CD14-positive monocyte (primary cell): ENCODE measurements at regions of chr6 and their contacts with region 1.

Region 1: DNA sequence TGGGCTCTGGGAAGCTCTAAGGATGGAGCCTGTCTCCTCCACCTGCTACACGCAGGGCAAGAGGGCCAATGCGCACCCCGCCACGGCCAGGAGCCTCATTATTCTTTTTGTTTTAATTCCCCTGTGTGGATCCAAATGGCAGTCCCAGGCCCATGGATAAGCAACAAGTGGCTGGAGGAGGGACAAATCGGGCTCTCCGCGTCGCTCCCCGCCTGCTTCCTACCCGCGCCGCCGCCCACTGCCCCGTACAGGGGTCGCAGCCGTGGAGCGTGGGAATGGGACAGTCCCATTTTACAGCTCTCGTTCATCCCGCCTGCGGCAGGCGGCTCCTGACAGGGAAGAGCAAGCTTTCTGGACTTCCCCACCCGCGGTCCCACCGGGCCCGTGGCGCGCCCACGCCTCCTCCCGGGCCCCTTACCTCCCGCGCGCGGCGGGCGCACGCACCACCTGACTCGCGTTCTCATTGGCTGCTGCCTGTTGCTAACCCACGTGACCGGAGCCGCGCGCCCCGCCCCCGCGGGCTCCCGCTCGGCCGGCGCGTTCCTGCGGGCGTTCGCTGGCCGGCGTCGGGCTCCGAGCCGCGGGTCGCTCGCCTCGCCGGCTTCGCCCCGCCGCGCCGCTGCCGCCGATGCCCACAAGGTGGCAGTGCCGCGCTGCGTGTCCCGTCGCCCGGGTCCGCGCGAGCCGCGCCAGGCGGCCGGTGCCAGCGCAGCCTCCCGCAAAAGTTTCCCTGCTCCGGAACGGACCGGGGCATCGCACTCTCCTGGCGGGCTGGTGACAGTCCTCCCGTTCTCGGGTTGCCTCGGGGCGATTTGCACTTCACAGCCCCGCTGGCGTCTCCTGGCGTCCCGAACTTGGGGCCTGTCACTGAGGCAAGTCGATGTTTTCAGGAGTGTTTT is 93.3 kb downstream of the CD83 start:
- DNase-seq: peak; percentile 81 to 92 (median 92)
- H3K4me3 ChIP-seq: peak overlapping the region; percentile 65 to 80 (median 72)
- H3K4me3 Mint-ChIP-seq: peak overlapping the region; percentile 85 to 92
- H3K27ac ChIP-seq: peak overlapping the region; percentile 65 to 89
- H3K27ac Mint-ChIP-seq: peak overlapping the region; percentile 88 to 97 (median 92)
- H3K4me1 ChIP-seq: peaks cover 21 to 25% of the 10 kb centered on the region in 2 donors
- H3K4me1 Mint-ChIP-seq: peaks cover 21% of the 10 kb centered on the region
- H3K27me3 ChIP-seq: no peaks in the 10 kb centered on the region
- H3K27me3 Mint-ChIP-seq: peaks cover 2 to 5% (median 3%) of the 10 kb centered on the region in 3 donors
- CTCF ChIP-seq: peak; percentile 64

Region 2: GRCh38 chr6:14016935-14017625 is 193.8 kb before region 1 on chr6:
- intact Hi-C with region 1: no loop called
- DNase-seq: no peak
- H3K4me3 ChIP-seq: no peak overlapping the region
- H3K4me3 Mint-ChIP-seq: no peak overlapping the region
- H3K27ac ChIP-seq: no peak overlapping the region
- H3K27ac Mint-ChIP-seq: no peak overlapping the region
- H3K4me1 ChIP-seq: no peaks in the 10 kb centered on the region
- H3K4me1 Mint-ChIP-seq: peaks cover 8% of the 10 kb centered on the region
- H3K27me3 ChIP-seq: no peaks in the 10 kb centered on the region
- H3K27me3 Mint-ChIP-seq: peaks cover 5 to 9% (median 7%) of the 10 kb centered on the region in 3 donors
- CTCF ChIP-seq: no peak

Region 3: GRCh38 chr6:14381829-14382677 is 171.1 kb after region 1 on chr6:
- intact Hi-C with region 1: no loop called
- DNase-seq: no peak
- H3K4me3 ChIP-seq: no peak overlapping the region
- H3K4me3 Mint-ChIP-seq: no peak overlapping the region
- H3K27ac ChIP-seq: peak overlapping the region in 1 of 2 donors; percentile 83
- H3K27ac Mint-ChIP-seq: peak overlapping the region in 1 of 7 donors; percentile 92
- H3K4me1 ChIP-seq: peaks cover 31 to 36% of the 10 kb centered on the region in 2 donors
- H3K4me1 Mint-ChIP-seq: peaks cover 44% of the 10 kb centered on the region
- H3K27me3 ChIP-seq: no peaks in the 10 kb centered on the region
- H3K27me3 Mint-ChIP-seq: peaks cover 0 to 2% (median 0%) of the 10 kb centered on the region in 3 donors
- CTCF ChIP-seq: no peak

Region 4: DNA sequence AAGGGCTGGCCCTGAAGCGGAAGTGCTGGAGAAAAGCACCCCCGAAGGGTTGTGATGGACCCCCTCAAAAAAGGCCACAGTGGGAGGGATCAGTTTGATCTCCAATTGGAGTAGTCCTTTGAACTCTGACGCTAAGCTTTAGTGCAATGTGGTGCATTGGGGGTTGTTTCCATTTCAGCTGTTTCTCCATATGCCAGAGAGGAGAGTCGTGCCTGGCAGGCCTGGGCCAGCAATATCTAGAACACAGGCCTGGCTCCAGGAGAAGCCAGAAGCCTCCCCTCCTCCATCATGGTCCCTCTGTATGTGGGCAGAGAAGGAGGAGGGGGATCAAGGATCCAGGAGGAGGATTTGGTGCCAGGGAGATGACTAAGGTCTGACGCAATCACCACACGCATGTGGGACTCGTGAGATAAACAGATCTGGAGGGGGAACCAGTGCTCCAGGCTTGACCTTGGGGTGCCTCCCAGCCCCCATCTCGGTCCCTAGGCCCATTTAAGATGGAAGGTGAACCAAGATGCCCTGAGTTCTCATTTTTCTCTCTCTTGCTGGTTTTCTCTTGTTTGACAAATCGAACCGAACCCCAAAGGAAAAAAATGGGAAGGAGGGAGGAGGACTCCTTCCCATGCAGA is 517.6 kb after region 1 on chr6:
- intact Hi-C with region 1: loop called in 1 of 2 experiments (anchors 5 kb)
- DNase-seq: peak; percentile 96 to 97 (median 96)
- H3K4me3 ChIP-seq: no peak overlapping the region
- H3K4me3 Mint-ChIP-seq: peak overlapping the region; percentile 21 to 39
- H3K27ac ChIP-seq: peak overlapping the region; percentile 99 to 100
- H3K27ac Mint-ChIP-seq: peak overlapping the region; percentile 96 to 100 (median 100)
- H3K4me1 ChIP-seq: peaks cover 62 to 64% of the 10 kb centered on the region in 2 donors
- H3K4me1 Mint-ChIP-seq: peaks cover 80% of the 10 kb centered on the region
- H3K27me3 ChIP-seq: no peaks in the 10 kb centered on the region
- H3K27me3 Mint-ChIP-seq: no peaks in the 10 kb centered on the region
- CTCF ChIP-seq: no peak

Region 5: GRCh38 chr6:15245361-15246216 is 1034.7 kb after region 1 on chr6 and contains the start of gene JARID2:
- intact Hi-C with region 1: loop called in 1 of 2 experiments (anchors 2 kb)
- DNase-seq: peak; percentile 97 to 98 (median 98)
- H3K4me3 ChIP-seq: peak within 1 kb of the TSS; percentile 90 to 100 (median 98)
- H3K4me3 Mint-ChIP-seq: peak within 1 kb of the TSS; percentile 99 to 100
- H3K27ac ChIP-seq: peak within 1 kb of the TSS; percentile 71 to 90
- H3K27ac Mint-ChIP-seq: peak within 1 kb of the TSS; percentile 96 to 99 (median 98)
- H3K4me1 ChIP-seq: peaks cover 33 to 44% of the 10 kb centered on the region in 2 donors
- H3K4me1 Mint-ChIP-seq: peaks cover 25% of the 10 kb centered on the region
- H3K27me3 ChIP-seq: no peaks in the 10 kb centered on the region
- H3K27me3 Mint-ChIP-seq: no peaks in the 10 kb centered on the region
- CTCF ChIP-seq: no peak
- polyA plus RNA-seq, gene JARID2: 6.8 to 17.5 (median 12.5) TPM